Panc1 (cell line): ENCODE measurements at regions of chr5 and their contacts with region 1.

Region 1: GRCh38 chr5:146034125-146034524 is 71.3 kb downstream of the PLAC8L1 start:
- DNase-seq: no peak
- ATAC-seq: no peak
- H3K4me3 ChIP-seq: no peak overlapping the region
- H3K27ac ChIP-seq: no peak overlapping the region
- H3K4me1 ChIP-seq: no peaks in the 10 kb centered on the region
- H3K27me3 ChIP-seq: no peaks in the 10 kb centered on the region
- CTCF ChIP-seq: no peak

Region 2: GRCh38 chr5:145689235-145689634 is 344.9 kb before region 1 on chr5:
- CTCF ChIA-PET with region 1: no interaction called
- POLR2A ChIA-PET with region 1: interaction called, 13 read pairs
- in situ Hi-C with region 1: no loop called
- intact Hi-C with region 1: no loop called
- DNase-seq: no peak
- ATAC-seq: no peak
- H3K4me3 ChIP-seq: no peak overlapping the region
- H3K27ac ChIP-seq: no peak overlapping the region
- H3K4me1 ChIP-seq: no peaks in the 10 kb centered on the region
- H3K27me3 ChIP-seq: no peaks in the 10 kb centered on the region
- CTCF ChIP-seq: no peak

Region 3: DNA sequence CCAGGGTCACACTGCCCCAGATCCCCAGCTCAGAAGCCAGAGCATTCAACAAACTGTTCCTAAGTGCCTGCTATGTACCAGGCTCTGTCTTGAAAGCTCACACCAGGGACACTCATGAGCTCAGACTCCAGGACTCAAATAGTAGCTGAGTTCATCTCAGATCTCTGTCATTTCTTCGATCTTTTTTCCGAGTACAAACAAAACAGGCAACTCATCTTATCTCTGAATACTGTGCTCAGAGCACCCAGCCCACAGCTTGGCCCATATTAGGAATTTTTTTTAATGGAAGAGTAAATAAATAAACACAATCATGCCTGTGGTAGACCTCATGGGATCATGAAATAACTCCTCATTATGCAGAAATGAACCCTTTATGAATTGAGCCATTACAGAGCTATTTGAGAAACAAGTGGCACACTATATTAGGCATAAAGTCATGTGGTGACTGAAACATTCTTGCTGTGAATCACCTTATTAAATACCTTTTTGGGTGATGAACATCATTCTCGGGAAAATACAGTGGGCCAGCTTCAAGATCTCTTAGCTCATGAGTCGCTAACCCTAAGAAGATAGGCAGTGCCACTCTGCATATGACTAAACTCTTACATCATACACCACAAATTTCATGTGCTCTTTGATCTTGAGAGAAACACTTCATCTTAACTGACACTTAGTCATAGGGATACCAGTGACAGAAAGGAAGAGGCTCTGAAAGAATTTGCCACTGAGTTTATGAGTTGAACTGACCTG is 87.8 kb before region 1 on chr5:
- CTCF ChIA-PET with region 1: no interaction called
- POLR2A ChIA-PET with region 1: interaction called, 10 read pairs
- in situ Hi-C with region 1: no loop called
- intact Hi-C with region 1: no loop called
- DNase-seq: peak; percentile 98
- ATAC-seq: peak; percentile 77
- H3K4me3 ChIP-seq: peak overlapping the region in 1 of 2 experiments; percentile 24; a peak in 2 of 4 replicates
- H3K27ac ChIP-seq: peak overlapping the region; percentile 80
- H3K4me1 ChIP-seq: peaks cover 58% of the 10 kb centered on the region
- H3K27me3 ChIP-seq: no peaks in the 10 kb centered on the region
- CTCF ChIP-seq: no peak

Region 4: GRCh38 chr5:146213210-146213826 is 179.2 kb after region 1 on chr5:
- CTCF ChIA-PET with region 1: no interaction called
- POLR2A ChIA-PET with region 1: no interaction called
- in situ Hi-C with region 1: no loop called
- intact Hi-C with region 1: no loop called
- DNase-seq: no peak
- ATAC-seq: no peak
- H3K4me3 ChIP-seq: no peak overlapping the region
- H3K27ac ChIP-seq: no peak overlapping the region
- H3K4me1 ChIP-seq: peaks cover 8% of the 10 kb centered on the region; the same call in 1 of the 2 replicates
- H3K27me3 ChIP-seq: no peaks in the 10 kb centered on the region
- CTCF ChIP-seq: no peak